ENCODE measurements at regions of chr19 and their contacts with region 1.

Region 1: DNA sequence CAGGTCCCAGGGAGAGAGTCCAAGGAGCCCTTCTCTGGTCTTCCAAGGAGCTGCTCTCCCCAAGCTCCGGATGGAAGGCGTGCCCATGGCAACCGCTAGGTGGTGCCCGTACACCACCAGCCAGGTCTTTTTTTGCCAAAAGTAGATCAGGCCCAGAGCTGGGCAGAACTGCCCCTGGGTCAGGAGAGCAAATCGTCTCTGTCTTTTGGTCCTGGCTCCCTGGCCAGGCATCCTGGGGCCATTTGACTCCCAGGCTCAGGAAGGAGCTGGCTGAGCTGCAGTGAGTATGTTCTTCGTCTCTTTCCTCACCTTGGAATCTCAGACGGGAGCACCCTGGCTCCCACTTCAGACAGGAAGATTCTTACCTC is 24.6 kb upstream of the BCL3 start:
- DNase-seq: peak; percentile 86
- ATAC-seq: peak; percentile 92

Region 2: GRCh38 chr19:44689056-44689895 is 34.7 kb before region 1 on chr19:
- intact Hi-C with region 1: loop called in 1 of 2 experiments (anchors 2 kb)
- DNase-seq: peak; percentile 82
- ATAC-seq: peak; percentile 43 to 51

Region 3: GRCh38 chr19:44757735-44758505 is 34.0 kb after region 1 on chr19:
- intact Hi-C with region 1: loop called in 1 of 2 experiments (anchors 5 kb)
- DNase-seq: peak; percentile 89
- ATAC-seq: peak; percentile 55 to 65

Region 4: DNA sequence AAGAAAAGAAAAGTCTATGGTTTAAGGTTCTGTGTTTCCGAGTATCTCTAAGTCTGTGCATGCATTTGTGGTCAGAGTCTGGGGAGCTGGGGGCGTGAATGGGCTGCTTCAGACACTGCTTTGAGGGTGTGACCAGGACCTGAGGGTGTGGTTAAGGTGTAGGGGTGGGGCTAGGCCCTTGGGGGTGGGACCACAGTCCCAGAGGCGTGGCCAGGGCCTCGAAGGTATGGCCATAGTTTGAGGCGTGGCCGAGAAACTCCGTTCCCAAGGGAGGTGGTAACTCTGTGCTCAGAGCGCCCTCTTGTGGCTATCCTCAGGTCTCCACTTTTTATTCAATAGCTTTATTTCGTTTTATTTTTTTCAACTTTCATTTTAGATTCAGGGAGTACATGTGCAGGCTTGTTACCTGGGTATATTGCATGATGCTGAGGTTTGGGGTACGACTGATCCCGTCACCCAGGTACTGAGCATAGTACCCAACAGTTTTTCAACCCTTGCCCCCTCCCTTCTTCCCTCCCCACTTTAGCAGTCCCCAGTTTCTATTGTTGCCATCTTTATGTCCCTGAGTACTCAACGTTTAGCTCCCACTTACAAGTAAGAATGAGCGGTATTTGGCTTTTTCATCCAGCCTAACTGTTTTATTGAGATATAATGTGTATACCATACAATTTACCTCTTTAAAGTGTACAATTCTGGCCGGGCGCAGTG is 46.8 kb after region 1 on chr19:
- intact Hi-C with region 1: loop called (anchors 1 to 2 kb)
- DNase-seq: peak; percentile 94
- ATAC-seq: peak; percentile 99